ENCODE measurements at regions of chr20 and their contacts with region 1.

Region 1: DNA sequence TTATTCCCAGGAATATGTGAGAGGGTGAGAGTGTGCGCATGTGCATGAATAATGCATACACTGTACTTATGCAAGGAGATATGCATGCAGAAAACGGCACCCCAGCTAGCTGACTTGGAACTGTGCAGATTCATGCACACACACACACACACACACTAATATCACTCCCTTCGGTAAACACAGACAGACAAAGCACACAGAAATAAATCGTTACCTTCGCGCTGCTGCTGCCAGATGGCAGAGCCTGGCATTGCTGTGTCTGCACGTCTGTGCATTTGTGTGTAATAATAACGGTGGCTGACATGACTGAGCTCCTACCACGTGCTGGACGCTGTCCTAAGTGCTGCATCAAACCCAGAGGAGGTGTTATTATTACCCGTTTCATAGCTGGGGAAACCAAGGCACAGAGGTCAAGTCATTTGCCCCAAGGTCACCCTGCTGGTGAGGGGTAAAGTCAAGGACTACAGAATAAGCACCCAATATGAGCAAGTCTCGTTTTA is 36.7 kb downstream of the PREX1 start:
- DNase-seq: no peak
- H3K4me3 ChIP-seq: no peak overlapping the region
- H3K27ac ChIP-seq: no peak overlapping the region
- H3K4me1 ChIP-seq: peaks cover 24% of the 10 kb centered on the region
- H3K27me3 ChIP-seq: no peaks in the 10 kb centered on the region
- CTCF ChIP-seq: no peak
- POLR2A ChIP-seq: no peak

Region 2: DNA sequence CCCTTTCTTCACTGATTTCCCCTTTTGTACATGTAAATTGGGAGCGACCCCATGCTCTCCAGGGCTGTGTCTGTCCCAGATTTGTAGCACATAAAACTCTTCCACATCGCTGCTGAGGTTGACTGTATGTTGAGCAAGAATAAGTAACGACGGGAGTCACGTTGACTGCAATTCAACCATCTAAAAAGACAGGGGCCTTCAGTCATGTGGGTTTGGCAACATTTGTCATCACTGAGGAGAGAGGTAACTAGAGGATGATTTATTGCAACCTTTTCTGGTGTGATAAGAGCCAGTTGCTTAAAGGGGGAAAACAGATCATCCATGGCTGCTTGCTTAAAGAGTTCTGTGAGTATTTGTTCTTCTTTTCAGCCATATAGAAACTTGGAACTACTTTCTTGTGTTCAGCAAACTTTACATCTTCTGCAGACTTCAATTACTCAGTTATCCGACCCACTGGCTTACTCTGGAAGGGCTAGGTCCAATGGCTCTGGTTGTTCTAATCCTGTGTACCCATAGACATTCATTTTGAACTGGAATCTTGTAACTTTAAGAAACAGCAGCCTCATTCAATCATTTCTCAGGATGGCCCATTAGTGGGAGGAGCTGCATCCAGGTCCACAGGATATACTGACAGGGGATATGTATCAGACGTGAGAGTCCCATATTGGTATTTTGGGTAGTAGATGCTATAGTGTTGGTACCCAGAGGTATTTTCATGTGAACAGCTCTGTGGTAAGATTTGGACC is 846.2 kb before region 1 on chr20:
- intact Hi-C with region 1: no loop called
- DNase-seq: no peak
- H3K4me3 ChIP-seq: no peak overlapping the region
- H3K27ac ChIP-seq: no peak overlapping the region
- H3K4me1 ChIP-seq: no peaks in the 10 kb centered on the region
- H3K27me3 ChIP-seq: no peaks in the 10 kb centered on the region
- CTCF ChIP-seq: no peak
- POLR2A ChIP-seq: no peak

Region 3: GRCh38 chr20:48738399-48739304 is 52.4 kb before region 1 on chr20:
- intact Hi-C with region 1: no loop called
- DNase-seq: no peak
- H3K4me3 ChIP-seq: no peak overlapping the region
- H3K27ac ChIP-seq: no peak overlapping the region
- H3K4me1 ChIP-seq: peaks cover 4% of the 10 kb centered on the region
- H3K27me3 ChIP-seq: no peaks in the 10 kb centered on the region
- CTCF ChIP-seq: no peak
- POLR2A ChIP-seq: no peak

Region 4: GRCh38 chr20:50346372-50347283 is 1555.6 kb after region 1 on chr20:
- intact Hi-C with region 1: loop called (anchors 5 kb)
- DNase-seq: no peak
- H3K4me3 ChIP-seq: no peak overlapping the region
- H3K27ac ChIP-seq: peak overlapping the region; percentile 90
- H3K4me1 ChIP-seq: peaks cover 37% of the 10 kb centered on the region
- H3K27me3 ChIP-seq: no peaks in the 10 kb centered on the region
- CTCF ChIP-seq: no peak
- POLR2A ChIP-seq: no peak